ENCODE measurements at regions of chr10 and their contacts with region 1.

Region 1: GRCh38 chr10:122298598-122299301 is 27.7 kb downstream of the BTBD16 start:
- DNase-seq: peak; percentile 39 to 84 (median 58)
- ATAC-seq: peak; percentile 95
- H3K4me3 ChIP-seq: no peak overlapping the region
- H3K4me3 Mint-ChIP-seq: peak overlapping the region; percentile 25
- H3K27ac ChIP-seq: no peak overlapping the region
- H3K27ac Mint-ChIP-seq: no peak overlapping the region
- H3K4me1 ChIP-seq: peaks cover 41% of the 10 kb centered on the region
- H3K4me1 Mint-ChIP-seq: peaks cover 14% of the 10 kb centered on the region
- H3K27me3 ChIP-seq: peaks cover 0 to 2% of the 10 kb centered on the region in 2 experiments
- H3K27me3 Mint-ChIP-seq: peaks cover 6% of the 10 kb centered on the region
- CTCF ChIP-seq: peak; percentile 90

Region 2: GRCh38 chr10:122342293-122343134 is 43.8 kb after region 1 on chr10:
- CTCF ChIA-PET with region 1: interaction called, 7 read pairs
- POLR2A ChIA-PET with region 1: no interaction called
- intact Hi-C with region 1: loop called (anchors 1 to 2 kb)
- DNase-seq: peak; percentile 41 to 79 (median 56)
- ATAC-seq: peak; percentile 80
- H3K4me3 ChIP-seq: no peak overlapping the region
- H3K4me3 Mint-ChIP-seq: no peak overlapping the region
- H3K27ac ChIP-seq: no peak overlapping the region
- H3K27ac Mint-ChIP-seq: no peak overlapping the region
- H3K4me1 ChIP-seq: peaks cover 7% of the 10 kb centered on the region
- H3K4me1 Mint-ChIP-seq: peaks cover 6% of the 10 kb centered on the region
- H3K27me3 ChIP-seq: peaks cover 0 to 2% of the 10 kb centered on the region in 2 experiments
- H3K27me3 Mint-ChIP-seq: peaks cover 7% of the 10 kb centered on the region
- CTCF ChIP-seq: peak; percentile 80

Region 3: GRCh38 chr10:122435212-122435827 is 136.6 kb after region 1 on chr10:
- CTCF ChIA-PET with region 1: interaction called, 22 read pairs
- POLR2A ChIA-PET with region 1: no interaction called
- intact Hi-C with region 1: loop called (anchors 1 kb)
- DNase-seq: peak in 3 of 14 experiments; percentile 71 to 77 (median 73)
- ATAC-seq: peak; percentile 49
- H3K4me3 ChIP-seq: no peak overlapping the region
- H3K4me3 Mint-ChIP-seq: no peak overlapping the region
- H3K27ac ChIP-seq: no peak overlapping the region
- H3K27ac Mint-ChIP-seq: peak overlapping the region; percentile 58
- H3K4me1 ChIP-seq: no peaks in the 10 kb centered on the region
- H3K4me1 Mint-ChIP-seq: peaks cover 12% of the 10 kb centered on the region
- H3K27me3 ChIP-seq: no peaks in the 10 kb centered on the region
- H3K27me3 Mint-ChIP-seq: no peaks in the 10 kb centered on the region
- CTCF ChIP-seq: peak; percentile 81

Region 4: DNA sequence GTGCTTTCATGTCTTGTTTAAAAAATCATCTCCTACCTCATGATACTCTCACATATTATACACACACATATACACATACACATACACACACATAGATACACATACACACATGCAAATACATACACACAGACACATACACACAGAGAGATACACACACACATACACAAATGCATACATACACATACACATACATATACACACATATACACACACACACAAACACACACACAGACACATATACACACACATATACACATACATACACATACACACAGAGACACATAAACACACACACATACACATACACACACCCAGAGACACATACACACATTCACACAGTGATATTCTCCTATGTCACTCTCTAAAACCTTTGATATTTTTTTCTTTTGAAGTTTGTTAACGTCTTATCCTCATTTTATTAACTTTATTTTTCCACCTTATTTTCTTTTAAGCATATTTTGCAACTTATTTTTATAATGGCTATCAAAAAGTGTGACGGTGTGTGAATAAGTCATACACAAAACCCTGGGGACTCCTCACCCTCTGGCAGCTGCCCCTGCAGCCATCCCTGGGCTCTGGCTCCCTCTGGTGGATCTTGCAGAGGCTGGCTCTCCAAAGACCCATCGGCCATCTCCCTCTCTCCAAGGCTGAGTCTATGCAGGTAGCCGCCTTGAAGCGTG is 404.8 kb after region 1 on chr10:
- CTCF ChIA-PET with region 1: interaction called, 4 read pairs
- POLR2A ChIA-PET with region 1: no interaction called
- intact Hi-C with region 1: loop called (anchors 1 to 2 kb)
- DNase-seq: peak; percentile 8 to 62 (median 34)
- ATAC-seq: no peak
- H3K4me3 ChIP-seq: no peak overlapping the region
- H3K4me3 Mint-ChIP-seq: no peak overlapping the region
- H3K27ac ChIP-seq: no peak overlapping the region
- H3K27ac Mint-ChIP-seq: no peak overlapping the region
- H3K4me1 ChIP-seq: peaks cover 9% of the 10 kb centered on the region
- H3K4me1 Mint-ChIP-seq: peaks cover 7% of the 10 kb centered on the region
- H3K27me3 ChIP-seq: no peaks in the 10 kb centered on the region
- H3K27me3 Mint-ChIP-seq: peaks cover 5% of the 10 kb centered on the region
- CTCF ChIP-seq: peak; percentile 74

Region 5: GRCh38 chr10:123559066-123559822 is 1260.5 kb after region 1 on chr10:
- CTCF ChIA-PET with region 1: no interaction called
- POLR2A ChIA-PET with region 1: no interaction called
- intact Hi-C with region 1: loop called in 1 of 2 experiments (anchors 2 kb)
- DNase-seq: peak; percentile 36 to 79 (median 61)
- ATAC-seq: peak; percentile 66
- H3K4me3 ChIP-seq: no peak overlapping the region
- H3K4me3 Mint-ChIP-seq: no peak overlapping the region
- H3K27ac ChIP-seq: no peak overlapping the region
- H3K27ac Mint-ChIP-seq: no peak overlapping the region
- H3K4me1 ChIP-seq: peaks cover 4% of the 10 kb centered on the region
- H3K4me1 Mint-ChIP-seq: no peaks in the 10 kb centered on the region
- H3K27me3 ChIP-seq: peaks cover 0 to 4% of the 10 kb centered on the region in 2 experiments
- H3K27me3 Mint-ChIP-seq: peaks cover 32% of the 10 kb centered on the region
- CTCF ChIP-seq: peak; percentile 98

Measured in CD4-positive, alpha-beta T cell (primary cell).